Activated B cell treated with CpG ODN at 0.5 μM for 24 hours (primary cell): ENCODE measurements at regions of chr12 and their contacts with region 1.

Region 1: DNA sequence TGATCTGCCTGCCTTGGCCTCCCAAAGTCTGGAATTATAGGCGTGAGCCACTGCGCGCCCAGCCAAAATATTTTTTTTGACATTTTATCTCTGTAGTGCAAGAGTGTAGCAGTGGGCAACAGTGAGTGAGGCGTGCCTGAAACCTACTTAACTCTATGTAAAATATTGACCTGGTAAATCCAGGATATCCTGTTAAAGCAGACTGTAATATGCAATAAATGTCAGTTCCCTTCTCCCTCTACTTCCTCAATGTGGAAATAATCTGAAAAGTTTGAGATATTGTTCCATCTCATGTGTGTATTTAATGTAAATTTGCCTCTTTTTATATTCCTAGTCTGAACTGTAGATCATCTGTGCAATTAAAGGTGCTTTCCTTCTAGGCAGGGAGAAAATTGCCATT is 9.5 kb upstream of the CDK17 start:
- DNase-seq: no peak
- ATAC-seq: no peak
- H3K4me3 Mint-ChIP-seq: no peak overlapping the region
- H3K27ac Mint-ChIP-seq: no peak overlapping the region
- H3K4me1 Mint-ChIP-seq: peaks cover 34% of the 10 kb centered on the region
- H3K27me3 Mint-ChIP-seq: no peaks in the 10 kb centered on the region
- CTCF ChIP-seq: no peak

Region 2: GRCh38 chr12:96422192-96422591 is 12.5 kb after region 1 on chr12:
- CTCF ChIA-PET with region 1: no interaction called
- POLR2A ChIA-PET with region 1: interaction called, 8 read pairs
- intact Hi-C with region 1: loop called (anchors 2 kb)
- DNase-seq: no peak
- ATAC-seq: no peak
- H3K4me3 Mint-ChIP-seq: no peak overlapping the region
- H3K27ac Mint-ChIP-seq: no peak overlapping the region
- H3K4me1 Mint-ChIP-seq: peaks cover 25% of the 10 kb centered on the region
- H3K27me3 Mint-ChIP-seq: no peaks in the 10 kb centered on the region
- CTCF ChIP-seq: no peak